IMR-90 (cell line): ENCODE measurements at regions of chr2 and their contacts with region 1.

Region 1: DNA sequence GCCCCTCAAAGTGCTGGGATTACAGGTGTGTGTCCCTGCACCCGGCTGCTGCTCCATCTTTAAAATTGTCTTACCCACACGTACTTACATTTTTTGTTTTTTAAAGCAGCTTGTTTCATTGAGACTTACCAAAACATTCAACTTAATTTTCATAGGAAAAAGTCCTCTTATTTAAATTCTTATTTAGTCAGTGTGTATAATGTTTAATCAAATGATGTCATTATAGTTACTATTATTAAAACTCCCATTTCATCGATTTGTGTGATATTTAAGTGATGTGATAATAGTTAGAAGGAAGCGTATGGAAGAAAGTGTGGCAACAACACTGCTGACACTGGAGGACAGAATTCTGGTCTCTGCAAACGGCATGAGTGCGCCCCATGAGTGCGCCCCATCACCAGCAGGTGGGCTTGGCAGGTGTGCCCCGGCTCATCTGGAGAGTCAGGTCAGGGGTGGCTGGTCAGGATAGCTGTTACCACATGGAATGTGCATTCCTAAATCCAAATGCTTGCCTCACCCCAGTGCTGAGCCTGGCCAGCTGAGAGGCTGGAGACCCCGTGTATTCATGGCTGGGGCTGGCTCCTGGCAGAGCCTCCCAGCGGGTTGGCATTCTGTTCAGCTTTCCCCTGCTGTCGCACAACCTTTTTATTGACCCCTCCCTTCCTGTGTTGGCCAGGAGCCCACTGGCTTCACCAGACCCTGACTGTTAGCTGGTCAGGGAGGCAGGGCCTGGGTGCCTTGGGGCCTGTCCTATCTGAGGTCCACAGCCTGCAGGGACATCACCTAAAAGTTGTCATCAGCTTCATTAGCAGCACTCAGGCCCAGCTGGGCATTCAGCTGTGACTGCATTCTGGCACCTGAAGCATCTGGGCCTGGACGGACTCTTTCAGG is 79.7 kb downstream of the AGAP1 start:
- DNase-seq: no peak
- ATAC-seq: no peak
- H3K4me3 ChIP-seq: no peak overlapping the region
- H3K27ac ChIP-seq: no peak overlapping the region
- H3K4me1 ChIP-seq: peaks cover 12% of the 10 kb centered on the region
- H3K27me3 ChIP-seq: no peaks in the 10 kb centered on the region
- CTCF ChIP-seq: no peak
- POLR2A ChIP-seq: no peak
- RAD21 ChIP-seq: no peak

Region 2: GRCh38 chr2:235366847-235367246 is 206.7 kb before region 1 on chr2:
- CTCF ChIA-PET with region 1: no interaction called
- POLR2A ChIA-PET with region 1: no interaction called
- dilution Hi-C with region 1: no loop called
- in situ Hi-C with region 1: no loop called
- intact Hi-C with region 1: no loop called
- DNase-seq: no peak
- ATAC-seq: no peak
- H3K4me3 ChIP-seq: no peak overlapping the region
- H3K27ac ChIP-seq: no peak overlapping the region
- H3K4me1 ChIP-seq: no peaks in the 10 kb centered on the region
- H3K27me3 ChIP-seq: peaks cover 63% of the 10 kb centered on the region
- CTCF ChIP-seq: no peak
- POLR2A ChIP-seq: no peak
- RAD21 ChIP-seq: no peak

Region 3: DNA sequence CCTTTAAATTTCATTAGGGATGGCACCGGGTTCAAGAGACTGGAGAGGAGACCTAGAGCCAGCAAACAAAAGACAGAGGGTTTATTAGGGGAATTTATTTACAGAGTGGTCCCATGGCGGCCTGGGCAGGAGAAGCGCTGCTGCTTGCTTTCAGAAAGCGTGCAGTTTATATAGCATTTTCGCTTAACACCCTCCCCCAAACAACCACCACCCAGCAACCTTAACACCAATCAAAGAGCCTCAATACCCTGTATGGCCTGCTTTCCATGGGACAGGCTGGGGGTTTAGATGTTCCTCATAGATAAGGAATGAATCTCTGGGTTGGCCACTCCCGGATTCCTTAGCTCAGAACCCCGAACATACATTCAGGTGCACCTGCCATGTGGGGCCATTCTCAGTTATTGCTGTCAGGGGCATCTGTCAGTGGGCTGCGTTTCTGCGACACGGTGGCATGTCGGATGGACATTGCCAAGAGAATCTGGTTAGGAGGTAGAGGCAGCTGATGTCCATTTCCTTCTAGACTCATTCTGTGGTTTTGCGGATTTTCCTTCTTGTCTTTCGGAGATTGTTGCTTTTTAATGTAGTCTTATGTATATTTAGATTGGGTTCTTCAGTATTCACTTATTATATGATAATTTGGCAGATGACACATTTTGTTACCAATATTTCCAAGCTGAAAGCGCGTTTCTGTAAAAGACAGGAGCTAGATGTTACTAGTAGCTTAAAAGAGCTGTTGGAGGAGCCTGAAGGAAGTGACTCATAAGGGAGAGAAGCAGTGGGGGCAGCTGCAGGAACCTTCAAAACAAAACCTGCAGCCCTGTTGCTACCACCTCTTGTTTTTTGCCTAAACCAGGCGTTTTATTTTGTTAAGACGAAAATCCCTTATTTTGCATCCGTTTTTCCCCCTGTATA is 72.6 kb before region 1 on chr2:
- CTCF ChIA-PET with region 1: no interaction called
- POLR2A ChIA-PET with region 1: no interaction called
- dilution Hi-C with region 1: no loop called
- in situ Hi-C with region 1: no loop called
- intact Hi-C with region 1: loop called (anchors 5 kb)
- DNase-seq: peak; percentile 71
- ATAC-seq: peak; percentile 85
- H3K4me3 ChIP-seq: no peak overlapping the region
- H3K27ac ChIP-seq: no peak overlapping the region
- H3K4me1 ChIP-seq: peaks cover 20% of the 10 kb centered on the region
- H3K27me3 ChIP-seq: no peaks in the 10 kb centered on the region
- CTCF ChIP-seq: no peak
- POLR2A ChIP-seq: no peak
- RAD21 ChIP-seq: no peak

Region 4: DNA sequence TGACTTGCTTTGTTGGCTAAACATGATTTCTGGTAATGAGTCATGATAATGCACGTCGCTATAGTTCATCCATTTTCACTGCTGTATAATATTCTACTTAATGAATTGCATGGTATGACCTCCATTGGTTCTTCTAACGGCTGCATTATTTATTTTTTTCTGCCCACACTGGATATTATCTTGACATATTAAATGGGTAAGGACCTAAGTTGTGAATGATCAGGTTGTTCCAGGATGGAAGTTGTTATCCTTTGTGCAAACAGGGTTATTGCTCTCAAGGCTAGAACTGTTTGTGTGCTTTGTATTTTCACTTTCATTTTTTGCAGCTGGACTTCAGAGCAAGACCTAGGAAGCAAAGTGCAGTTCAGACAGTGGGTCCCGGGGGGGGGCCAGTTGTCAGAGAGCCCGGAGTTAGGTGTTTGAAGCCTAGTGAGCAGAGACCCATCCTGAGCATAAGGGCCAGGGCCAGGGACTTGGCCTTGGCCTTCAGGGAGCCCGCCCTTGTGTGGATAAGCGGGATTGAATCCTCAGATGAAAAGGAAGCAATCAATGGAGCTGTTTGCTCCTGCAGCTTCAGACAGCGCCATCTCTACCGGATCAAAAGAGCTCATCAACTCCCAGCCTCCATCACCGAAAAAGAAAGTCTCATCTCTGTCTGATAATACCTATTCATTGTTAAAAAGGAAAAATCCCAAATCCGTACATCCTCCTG is 31.6 kb before region 1 on chr2:
- CTCF ChIA-PET with region 1: no interaction called
- POLR2A ChIA-PET with region 1: interaction called, 12 read pairs
- dilution Hi-C with region 1: no loop called
- in situ Hi-C with region 1: no loop called
- intact Hi-C with region 1: no loop called
- DNase-seq: no peak
- ATAC-seq: no peak
- H3K4me3 ChIP-seq: no peak overlapping the region
- H3K27ac ChIP-seq: no peak overlapping the region
- H3K4me1 ChIP-seq: peaks cover 2% of the 10 kb centered on the region; the same call in 1 of the 2 replicates
- H3K27me3 ChIP-seq: no peaks in the 10 kb centered on the region
- CTCF ChIP-seq: no peak
- POLR2A ChIP-seq: no peak
- RAD21 ChIP-seq: no peak

Region 5: DNA sequence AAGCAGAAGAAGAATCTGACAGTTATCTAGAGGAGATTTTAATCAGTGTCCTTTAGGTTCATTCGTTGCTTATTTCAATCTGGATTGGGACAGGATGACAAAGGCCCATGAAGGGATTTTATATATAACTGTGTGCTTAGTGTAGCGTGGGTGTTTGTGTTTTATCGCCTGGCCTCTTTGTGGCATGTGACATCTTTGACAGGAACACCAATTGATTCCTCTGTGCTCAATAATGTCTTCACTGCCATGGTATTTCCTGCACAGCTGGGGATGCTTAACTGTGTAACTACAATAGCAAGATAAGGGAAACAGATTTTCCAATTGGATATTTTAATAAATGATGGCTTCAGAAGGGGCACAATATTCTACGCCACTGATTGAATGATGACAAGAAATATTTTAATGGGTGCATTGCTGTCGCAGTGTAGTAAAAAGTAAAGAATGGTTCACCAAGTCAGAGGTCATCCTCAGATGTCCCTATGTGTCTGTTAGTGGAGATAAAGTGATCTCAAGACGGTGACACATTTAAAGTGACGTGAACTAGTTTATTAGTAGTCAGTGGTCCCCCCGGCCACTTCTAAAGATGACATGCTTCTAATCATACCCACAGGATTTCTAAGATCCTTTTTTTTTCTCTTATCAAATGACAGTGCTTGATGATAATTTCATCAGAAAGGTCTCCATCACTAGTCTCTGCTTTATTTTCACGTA is 80.7 kb after region 1 on chr2:
- CTCF ChIA-PET with region 1: no interaction called
- POLR2A ChIA-PET with region 1: no interaction called
- dilution Hi-C with region 1: no loop called
- in situ Hi-C with region 1: no loop called
- intact Hi-C with region 1: no loop called
- DNase-seq: peak; percentile 74
- ATAC-seq: peak; percentile 81
- H3K4me3 ChIP-seq: no peak overlapping the region
- H3K27ac ChIP-seq: no peak overlapping the region
- H3K4me1 ChIP-seq: peaks cover 8% of the 10 kb centered on the region
- H3K27me3 ChIP-seq: no peaks in the 10 kb centered on the region
- CTCF ChIP-seq: no peak
- POLR2A ChIP-seq: no peak
- RAD21 ChIP-seq: no peak